Activated CD4-positive, alpha-beta T cell treated with anti-CD3 and anti-CD28 coated beads for 36 hours (primary cell): ENCODE measurements at regions of chr1 and their contacts with region 1.

Region 1: GRCh38 chr1:27725374-27726173 is at the start of gene FAM76A:
- DNase-seq: peak; percentile 100
- ATAC-seq: peak; percentile 95
- H3K4me3 Mint-ChIP-seq: peak within 1 kb of the TSS; percentile 78
- H3K27ac Mint-ChIP-seq: peak within 1 kb of the TSS; percentile 93
- H3K4me1 Mint-ChIP-seq: peaks cover 15% of the 10 kb centered on the region
- H3K27me3 Mint-ChIP-seq: no peaks in the 10 kb centered on the region
- total RNA-seq, gene FAM76A: 7.4 to 8.1 TPM

Region 2: GRCh38 chr1:27321813-27322577 is 403.6 kb before region 1 on chr1 and contains the start of gene TMEM222:
- CTCF ChIA-PET with region 1: no interaction called
- POLR2A ChIA-PET with region 1: no interaction called
- intact Hi-C with region 1: loop called in 1 of 2 experiments (anchors 1 kb)
- DNase-seq: peak; percentile 99
- ATAC-seq: peak; percentile 98
- H3K4me3 Mint-ChIP-seq: peak within 1 kb of the TSS; percentile 94
- H3K27ac Mint-ChIP-seq: peak within 1 kb of the TSS; percentile 90
- H3K4me1 Mint-ChIP-seq: peaks cover 41% of the 10 kb centered on the region
- H3K27me3 Mint-ChIP-seq: no peaks in the 10 kb centered on the region
- total RNA-seq, gene TMEM222: 27.5 to 31.2 TPM

Region 3: DNA sequence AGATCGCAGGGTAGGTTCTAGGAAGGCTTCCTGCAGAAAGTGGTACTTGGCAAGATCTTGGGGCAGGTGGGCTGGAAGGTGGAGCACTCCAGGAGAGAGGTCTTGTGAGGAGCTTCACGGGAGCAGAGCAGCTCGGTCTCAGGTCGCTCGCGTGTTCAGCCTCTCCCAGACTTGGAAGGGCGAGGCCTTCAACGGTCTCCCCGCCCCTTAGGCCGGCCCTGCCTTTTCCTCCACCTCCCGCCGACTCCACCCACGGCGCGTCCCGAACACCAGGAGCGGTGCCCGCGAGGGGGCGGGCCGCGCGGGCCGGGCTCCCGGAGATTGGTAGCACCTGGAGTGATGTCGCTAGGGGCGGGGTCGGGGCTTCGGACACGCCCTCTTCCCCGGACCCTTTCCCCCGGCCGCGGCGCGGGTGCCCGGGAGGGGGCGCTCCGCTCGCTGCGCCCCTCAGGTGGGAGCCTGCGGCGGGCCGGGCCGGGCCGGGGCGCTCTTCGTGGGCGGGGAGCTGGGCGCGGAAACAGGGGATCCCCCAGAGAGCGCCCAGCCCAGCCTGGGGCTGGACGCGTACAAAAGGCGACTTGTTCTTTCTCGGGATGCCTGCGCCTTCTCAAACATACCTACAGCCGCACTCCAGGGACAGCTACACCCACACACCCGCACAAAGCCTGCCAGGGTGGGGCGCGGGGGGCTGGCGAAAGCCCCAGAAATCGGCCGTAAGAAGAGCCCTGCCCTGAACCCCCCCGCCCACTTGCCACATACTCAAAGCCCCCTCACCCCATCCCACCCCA is 157.1 kb before region 1 on chr1:
- CTCF ChIA-PET with region 1: no interaction called
- POLR2A ChIA-PET with region 1: interaction called, 3 read pairs
- intact Hi-C with region 1: loop called in 1 of 2 experiments (anchors 1 kb)
- DNase-seq: peak; percentile 95
- ATAC-seq: peak; percentile 97
- H3K4me3 Mint-ChIP-seq: peak overlapping the region; percentile 39
- H3K27ac Mint-ChIP-seq: no peak overlapping the region
- H3K4me1 Mint-ChIP-seq: peaks cover 18% of the 10 kb centered on the region
- H3K27me3 Mint-ChIP-seq: no peaks in the 10 kb centered on the region

Region 4: GRCh38 chr1:27632387-27633297 is 92.9 kb before region 1 on chr1:
- CTCF ChIA-PET with region 1: no interaction called
- POLR2A ChIA-PET with region 1: no interaction called
- intact Hi-C with region 1: no loop called
- DNase-seq: peak; percentile 80
- ATAC-seq: peak; percentile 62
- H3K4me3 Mint-ChIP-seq: peak overlapping the region; percentile 42
- H3K27ac Mint-ChIP-seq: peak overlapping the region; percentile 62
- H3K4me1 Mint-ChIP-seq: peaks cover 70% of the 10 kb centered on the region
- H3K27me3 Mint-ChIP-seq: no peaks in the 10 kb centered on the region

Region 5: DNA sequence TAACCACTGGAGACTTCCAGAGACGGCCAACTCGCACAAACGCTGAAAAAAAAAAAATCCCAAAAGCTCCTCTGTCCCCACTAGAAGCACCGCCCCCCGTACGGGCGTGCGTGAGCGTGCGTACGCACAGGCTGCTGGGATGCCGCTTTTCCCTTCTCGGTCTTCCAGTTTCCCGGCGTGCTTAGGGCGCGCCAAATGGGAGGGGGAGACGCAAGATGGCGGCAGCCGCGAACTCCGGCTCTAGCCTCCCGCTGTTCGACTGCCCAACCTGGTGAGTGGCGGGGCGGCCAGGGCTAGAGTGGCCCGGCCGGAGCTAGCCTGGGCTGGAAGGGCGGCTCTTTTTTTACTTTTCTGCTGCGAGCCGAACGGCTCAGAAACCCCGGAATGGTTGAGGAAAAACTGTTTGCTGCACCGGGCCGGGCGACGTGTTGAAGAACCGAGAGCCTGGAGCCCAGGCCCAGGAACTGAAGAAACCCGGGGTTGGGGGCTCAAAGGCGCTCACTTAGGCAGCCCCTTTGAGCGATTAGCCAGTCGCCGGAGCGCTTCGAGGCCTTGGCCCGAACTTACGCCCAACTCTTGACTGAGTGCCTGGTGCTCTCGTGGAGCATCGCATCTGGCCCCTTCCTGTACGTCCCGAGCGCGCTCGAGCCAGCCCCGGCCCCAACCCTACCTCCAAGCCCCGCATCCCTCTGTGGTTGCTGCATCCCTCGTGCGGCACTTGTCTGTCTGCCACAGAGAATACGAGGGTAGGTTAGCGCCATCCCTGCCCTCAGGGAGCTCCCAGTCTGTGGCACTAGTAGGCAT is 105.2 kb after region 1 on chr1 and contains the start of gene PPP1R8:
- CTCF ChIA-PET with region 1: no interaction called
- POLR2A ChIA-PET with region 1: interaction called, 4 read pairs
- intact Hi-C with region 1: loop called in 1 of 2 experiments (anchors 1 kb)
- DNase-seq: peak; percentile 94
- ATAC-seq: peak; percentile 99
- H3K4me3 Mint-ChIP-seq: peak within 1 kb of the TSS; percentile 94
- H3K27ac Mint-ChIP-seq: peak within 1 kb of the TSS; percentile 94
- H3K4me1 Mint-ChIP-seq: peaks cover 40% of the 10 kb centered on the region
- H3K27me3 Mint-ChIP-seq: no peaks in the 10 kb centered on the region
- total RNA-seq, gene PPP1R8: 49.6 to 65.9 TPM

Region 6: DNA sequence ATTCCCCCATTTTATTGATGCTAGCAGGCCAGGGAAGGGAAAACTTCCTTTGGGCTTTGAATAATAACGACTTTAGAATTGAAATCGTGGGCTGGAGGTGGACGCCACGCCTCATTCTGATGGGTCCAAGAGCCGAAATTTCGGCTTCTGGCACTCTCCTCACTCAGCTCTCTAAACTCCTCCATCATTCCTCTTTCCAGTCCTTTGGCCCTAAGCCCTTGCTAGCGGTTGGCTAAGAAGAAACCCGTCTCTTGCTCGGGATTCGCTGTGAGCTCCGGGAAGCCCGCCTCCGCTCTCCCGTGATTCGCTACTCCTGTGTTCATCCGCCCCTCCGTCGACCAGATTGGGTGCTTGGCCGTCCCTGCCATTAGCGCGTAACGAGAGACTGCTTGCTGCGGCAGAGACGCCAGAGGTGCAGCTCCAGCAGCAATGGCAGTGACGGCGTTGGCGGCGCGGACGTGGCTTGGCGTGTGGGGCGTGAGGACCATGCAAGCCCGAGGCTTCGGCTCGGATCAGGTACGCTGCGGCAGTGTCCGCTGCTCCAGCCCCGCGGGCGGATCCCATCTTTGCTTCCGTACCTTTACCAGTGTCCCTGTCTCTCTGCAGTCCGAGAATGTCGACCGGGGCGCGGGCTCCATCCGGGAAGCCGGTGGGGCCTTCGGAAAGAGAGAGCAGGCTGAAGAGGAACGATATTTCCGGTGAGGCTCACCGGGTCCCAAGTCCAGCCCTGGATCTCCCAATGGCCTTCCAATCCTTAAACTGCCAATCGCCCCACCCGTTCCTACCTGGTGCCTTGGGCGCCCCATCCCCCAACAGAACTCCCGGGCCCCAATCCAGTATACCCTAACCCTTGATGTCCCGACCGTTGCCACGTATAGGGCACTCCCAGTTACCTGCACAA is 510.4 kb after region 1 on chr1 and contains the start of gene ATP5IF1:
- CTCF ChIA-PET with region 1: no interaction called
- POLR2A ChIA-PET with region 1: no interaction called
- intact Hi-C with region 1: loop called in 1 of 2 experiments (anchors 1 kb)
- DNase-seq: peak; percentile 97
- ATAC-seq: peak; percentile 97
- H3K4me3 Mint-ChIP-seq: no peak within 1 kb of the TSS
- H3K27ac Mint-ChIP-seq: no peak within 1 kb of the TSS
- H3K4me1 Mint-ChIP-seq: peaks cover 15% of the 10 kb centered on the region
- H3K27me3 Mint-ChIP-seq: no peaks in the 10 kb centered on the region
- total RNA-seq, gene ATP5IF1: 192 to 195 TPM